MCF 10A (cell line): ENCODE measurements at regions of chr11 and their contacts with region 1.

Region 1: DNA sequence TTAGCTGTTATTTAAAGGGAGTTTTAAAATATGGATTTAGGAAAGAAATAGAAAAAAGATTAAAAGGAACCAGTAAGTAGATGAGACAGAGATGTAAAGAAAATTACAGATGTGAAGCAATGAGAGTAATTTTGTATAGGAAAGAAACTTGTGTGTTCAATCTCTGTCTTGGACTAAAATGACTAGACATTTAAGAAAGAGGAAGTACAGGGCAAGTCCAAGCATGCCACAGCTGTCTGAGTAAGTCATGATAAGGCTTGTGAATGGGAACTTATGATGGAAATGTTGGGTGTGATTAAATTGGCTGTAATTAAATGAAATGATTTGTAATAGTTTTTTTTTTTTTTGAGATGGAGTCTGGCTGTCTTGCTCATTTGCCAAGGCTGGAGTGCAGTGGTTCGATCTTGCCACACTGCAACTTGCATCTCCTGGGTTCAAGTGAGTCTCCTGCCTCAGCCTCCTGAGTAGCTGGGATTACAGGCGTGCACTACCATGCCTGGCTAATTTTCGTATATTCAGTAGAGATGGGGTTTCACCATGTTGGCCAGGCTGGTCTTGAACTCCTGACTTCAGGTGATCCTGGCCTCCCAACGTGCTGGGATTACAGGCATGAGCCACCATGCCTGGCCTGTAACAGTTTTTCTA is 5.9 kb upstream of the ACY3 start:
- DNase-seq: peak; percentile 39
- H3K4me3 Mint-ChIP-seq: no peak overlapping the region
- H3K27ac Mint-ChIP-seq: peak overlapping the region; percentile 64
- H3K4me1 Mint-ChIP-seq: no peaks in the 10 kb centered on the region
- H3K27me3 Mint-ChIP-seq: no peaks in the 10 kb centered on the region
- CTCF ChIP-seq: no peak

Region 2: GRCh38 chr11:67640021-67640757 is 16.2 kb before region 1 on chr11:
- CTCF ChIA-PET with region 1: interaction called, 14 read pairs
- POLR2A ChIA-PET with region 1: interaction called, 3 read pairs
- intact Hi-C with region 1: loop called (anchors 1 kb)
- DNase-seq: peak; percentile 66
- H3K4me3 Mint-ChIP-seq: no peak overlapping the region
- H3K27ac Mint-ChIP-seq: no peak overlapping the region
- H3K4me1 Mint-ChIP-seq: no peaks in the 10 kb centered on the region
- H3K27me3 Mint-ChIP-seq: no peaks in the 10 kb centered on the region
- CTCF ChIP-seq: peak; percentile 68

Region 3: GRCh38 chr11:67680696-67681470 is 24.5 kb after region 1 on chr11:
- CTCF ChIA-PET with region 1: no interaction called
- POLR2A ChIA-PET with region 1: no interaction called
- intact Hi-C with region 1: no loop called
- DNase-seq: no peak
- H3K4me3 Mint-ChIP-seq: no peak overlapping the region
- H3K27ac Mint-ChIP-seq: no peak overlapping the region
- H3K4me1 Mint-ChIP-seq: no peaks in the 10 kb centered on the region
- H3K27me3 Mint-ChIP-seq: peaks cover 27% of the 10 kb centered on the region
- CTCF ChIP-seq: no peak